Lower lobe of right lung (tissue), 2 donors: ENCODE measurements at regions of chr6 and their contacts with region 1.

Region 1: DNA sequence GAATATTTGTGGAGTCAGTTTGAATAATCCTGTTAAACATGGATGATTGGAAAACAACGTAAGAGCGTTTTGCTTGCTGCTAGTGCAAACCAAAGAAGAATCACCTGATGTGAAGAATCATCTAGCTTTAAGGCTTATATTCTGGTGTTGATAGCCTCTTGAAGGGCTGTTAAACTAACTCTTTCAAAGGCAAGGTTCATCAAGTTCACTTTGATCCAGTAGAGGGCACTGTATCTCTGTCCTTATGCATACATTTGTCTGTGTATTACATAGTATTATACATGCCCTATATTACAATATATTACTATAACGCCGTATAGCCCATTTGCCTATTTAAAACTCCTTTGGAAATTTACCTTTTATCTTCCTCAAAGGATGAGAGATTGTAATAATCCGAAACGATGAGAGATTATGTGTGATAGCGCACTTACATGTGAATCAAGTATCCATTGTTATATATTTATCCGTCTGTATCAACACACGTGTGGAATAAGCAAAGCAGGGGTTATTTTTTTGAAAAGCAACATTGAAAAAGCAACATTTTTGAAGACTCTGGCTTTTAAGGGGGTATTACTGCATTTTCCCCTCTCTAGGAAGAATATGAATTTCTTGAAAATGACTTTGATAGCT is 50.8 kb upstream of the NRN1 start:
- DNase-seq: no peak
- ATAC-seq: peak; percentile 61 to 69
- H3K4me3 ChIP-seq: no peak overlapping the region
- H3K27ac ChIP-seq: no peak overlapping the region
- H3K4me1 ChIP-seq: no peaks in the 10 kb centered on the region
- H3K27me3 ChIP-seq: no peaks in the 10 kb centered on the region
- CTCF ChIP-seq: peak; percentile 63

Region 2: GRCh38 chr6:6547110-6547879 is 489.8 kb after region 1 on chr6:
- intact Hi-C with region 1: loop called (anchors 5 kb)
- DNase-seq: peak; percentile 82
- ATAC-seq: peak; percentile 96 to 98
- H3K4me3 ChIP-seq: peak overlapping the region; percentile 48
- H3K27ac ChIP-seq: no peak overlapping the region
- H3K4me1 ChIP-seq: peaks cover 11% of the 10 kb centered on the region
- H3K27me3 ChIP-seq: peaks cover 32% of the 10 kb centered on the region
- CTCF ChIP-seq: peak; percentile 93